B cell (primary cell): ENCODE measurements at regions of chr1 and their contacts with region 1.

Region 1: DNA sequence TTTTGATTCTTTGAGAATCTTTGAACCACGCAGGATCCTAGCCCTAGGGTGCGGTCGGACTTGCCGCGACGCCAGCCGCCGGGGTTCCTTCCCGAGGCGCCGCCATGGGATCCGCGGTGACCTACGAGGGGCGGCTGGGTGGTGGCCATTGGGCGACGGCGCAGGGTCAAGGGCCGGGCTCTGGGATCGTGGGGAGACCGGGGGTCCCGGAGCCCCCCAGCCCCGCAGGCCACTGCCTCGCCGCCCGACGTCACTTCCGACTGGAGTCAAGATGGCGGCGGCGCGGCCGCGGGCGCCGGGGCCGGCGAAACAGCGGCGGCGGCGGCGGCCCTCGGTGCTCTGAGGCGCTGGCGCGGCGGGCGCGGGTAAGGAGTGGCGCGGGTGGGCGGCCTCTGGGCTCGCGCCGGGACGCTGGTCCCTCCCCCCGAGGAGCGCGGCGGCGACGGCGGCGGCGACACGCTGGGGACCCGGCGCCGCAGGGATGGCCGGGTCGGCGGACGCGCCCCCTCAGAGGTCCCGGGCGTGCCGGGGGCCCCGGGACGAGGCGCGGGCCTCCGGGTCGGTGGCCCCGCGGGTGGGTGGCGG is at the start of gene PRDM2:
- DNase-seq: peak; percentile 90
- ATAC-seq: peak; percentile 50
- H3K4me3 ChIP-seq: peak within 1 kb of the TSS; percentile 81 to 91 (median 84)
- H3K4me3 Mint-ChIP-seq: peak within 1 kb of the TSS; percentile 96
- H3K27ac ChIP-seq: peak within 1 kb of the TSS; percentile 95 to 98
- H3K27ac Mint-ChIP-seq: peak within 1 kb of the TSS; percentile 99
- H3K4me1 ChIP-seq: peaks cover 44 to 51% of the 10 kb centered on the region in 2 donors
- H3K4me1 Mint-ChIP-seq: peaks cover 52% of the 10 kb centered on the region
- H3K27me3 ChIP-seq: no peaks in the 10 kb centered on the region
- H3K27me3 Mint-ChIP-seq: no peaks in the 10 kb centered on the region
- CTCF ChIP-seq: no peak
- total RNA-seq, gene PRDM2: 432 and 447 TPM in 2 replicates

Region 2: DNA sequence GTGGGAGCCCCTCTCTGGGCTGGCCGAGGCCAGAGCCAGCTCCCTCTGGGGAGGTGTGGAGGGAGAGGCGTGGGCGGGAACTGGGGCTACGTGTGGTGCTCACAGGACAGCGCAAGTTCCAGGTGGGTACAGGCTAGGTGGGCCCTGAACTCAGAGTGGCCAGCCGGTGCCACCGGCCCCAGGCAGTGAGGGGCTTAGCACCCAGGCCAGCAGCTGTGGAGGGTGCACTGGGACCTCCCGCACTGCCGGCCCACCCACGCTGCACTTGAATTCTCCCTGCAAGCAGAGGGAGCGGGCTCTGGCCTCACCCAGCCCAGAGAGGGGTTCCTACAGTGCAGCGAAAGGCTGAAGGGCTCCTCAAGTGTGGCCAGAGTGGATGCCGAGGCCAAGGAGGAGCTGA is 269.5 kb before region 1 on chr1:
- CTCF ChIA-PET with region 1: no interaction called
- POLR2A ChIA-PET with region 1: no interaction called
- intact Hi-C with region 1: no loop called
- DNase-seq: no peak
- ATAC-seq: no peak
- H3K4me3 ChIP-seq: no peak overlapping the region
- H3K4me3 Mint-ChIP-seq: no peak overlapping the region
- H3K27ac ChIP-seq: no peak overlapping the region
- H3K27ac Mint-ChIP-seq: no peak overlapping the region
- H3K4me1 ChIP-seq: no peaks in the 10 kb centered on the region
- H3K4me1 Mint-ChIP-seq: no peaks in the 10 kb centered on the region
- H3K27me3 ChIP-seq: no peaks in the 10 kb centered on the region
- H3K27me3 Mint-ChIP-seq: peaks cover 4% of the 10 kb centered on the region
- CTCF ChIP-seq: no peak

Region 3: DNA sequence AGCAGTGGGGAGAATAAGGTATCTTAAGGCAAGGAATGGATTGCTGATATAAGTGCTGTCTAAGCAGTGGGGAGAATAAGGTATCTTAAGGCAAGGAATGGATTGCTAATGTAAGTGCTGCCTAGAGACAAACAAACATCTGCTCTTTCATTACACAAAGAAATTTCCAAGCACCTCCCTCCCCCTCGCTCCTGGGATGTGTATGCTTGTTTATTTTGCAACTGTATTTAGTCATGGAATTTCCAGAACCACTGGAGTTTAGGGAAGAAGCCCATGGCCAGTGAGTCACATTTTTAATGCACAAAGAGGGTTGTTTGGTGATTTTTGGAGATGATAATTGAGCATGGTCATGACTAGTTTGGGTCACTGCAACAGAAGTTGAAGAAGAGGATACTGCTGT is 94.9 kb before region 1 on chr1:
- CTCF ChIA-PET with region 1: no interaction called
- POLR2A ChIA-PET with region 1: no interaction called
- intact Hi-C with region 1: no loop called
- DNase-seq: no peak
- ATAC-seq: no peak
- H3K4me3 ChIP-seq: no peak overlapping the region
- H3K4me3 Mint-ChIP-seq: no peak overlapping the region
- H3K27ac ChIP-seq: no peak overlapping the region
- H3K27ac Mint-ChIP-seq: no peak overlapping the region
- H3K4me1 ChIP-seq: no peaks in the 10 kb centered on the region
- H3K4me1 Mint-ChIP-seq: no peaks in the 10 kb centered on the region
- H3K27me3 ChIP-seq: peaks cover 0 to 3% (median 0%) of the 10 kb centered on the region in 4 experiments
- H3K27me3 Mint-ChIP-seq: peaks cover 17% of the 10 kb centered on the region
- CTCF ChIP-seq: no peak

Region 4: GRCh38 chr1:13662493-13662892 is 37.5 kb before region 1 on chr1:
- CTCF ChIA-PET with region 1: interaction called, 41 read pairs
- POLR2A ChIA-PET with region 1: interaction called, 6 read pairs
- intact Hi-C with region 1: loop called (anchors 1 kb)
- DNase-seq: no peak
- ATAC-seq: no peak
- H3K4me3 ChIP-seq: no peak overlapping the region
- H3K4me3 Mint-ChIP-seq: no peak overlapping the region
- H3K27ac ChIP-seq: no peak overlapping the region
- H3K27ac Mint-ChIP-seq: no peak overlapping the region
- H3K4me1 ChIP-seq: peaks cover 22 to 23% of the 10 kb centered on the region in 2 donors
- H3K4me1 Mint-ChIP-seq: peaks cover 31% of the 10 kb centered on the region
- H3K27me3 ChIP-seq: no peaks in the 10 kb centered on the region
- H3K27me3 Mint-ChIP-seq: peaks cover 3% of the 10 kb centered on the region
- CTCF ChIP-seq: no peak

Region 5: DNA sequence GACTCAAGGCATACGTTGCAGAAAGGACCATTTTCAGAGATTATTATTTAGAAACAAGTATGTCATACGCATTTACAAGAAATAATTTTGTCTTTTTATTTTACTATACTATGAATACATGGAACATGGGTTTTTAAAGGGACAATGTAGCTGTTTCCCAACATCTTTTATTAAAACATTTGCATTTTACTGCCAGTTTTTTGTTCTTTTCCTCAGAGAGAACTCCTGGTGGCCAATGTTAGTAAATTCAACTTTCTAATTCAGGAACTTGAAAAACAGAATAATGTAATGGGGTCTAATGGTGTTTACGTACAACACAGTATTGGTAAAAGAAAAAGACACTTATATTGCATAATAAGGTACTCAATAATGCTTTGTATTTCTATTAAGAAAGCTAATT is 14.8 kb after region 1 on chr1:
- CTCF ChIA-PET with region 1: interaction called, 19 read pairs
- POLR2A ChIA-PET with region 1: interaction called, 22 read pairs
- intact Hi-C with region 1: loop called (anchors 1 kb)
- DNase-seq: no peak
- ATAC-seq: no peak
- H3K4me3 ChIP-seq: no peak overlapping the region
- H3K4me3 Mint-ChIP-seq: peak overlapping the region; percentile 13
- H3K27ac ChIP-seq: peak overlapping the region in 1 of 2 donors; percentile 86
- H3K27ac Mint-ChIP-seq: peak overlapping the region; percentile 27
- H3K4me1 ChIP-seq: peaks cover 36 to 38% of the 10 kb centered on the region in 2 donors
- H3K4me1 Mint-ChIP-seq: peaks cover 67% of the 10 kb centered on the region
- H3K27me3 ChIP-seq: no peaks in the 10 kb centered on the region
- H3K27me3 Mint-ChIP-seq: no peaks in the 10 kb centered on the region
- CTCF ChIP-seq: peak; percentile 65

Region 6: DNA sequence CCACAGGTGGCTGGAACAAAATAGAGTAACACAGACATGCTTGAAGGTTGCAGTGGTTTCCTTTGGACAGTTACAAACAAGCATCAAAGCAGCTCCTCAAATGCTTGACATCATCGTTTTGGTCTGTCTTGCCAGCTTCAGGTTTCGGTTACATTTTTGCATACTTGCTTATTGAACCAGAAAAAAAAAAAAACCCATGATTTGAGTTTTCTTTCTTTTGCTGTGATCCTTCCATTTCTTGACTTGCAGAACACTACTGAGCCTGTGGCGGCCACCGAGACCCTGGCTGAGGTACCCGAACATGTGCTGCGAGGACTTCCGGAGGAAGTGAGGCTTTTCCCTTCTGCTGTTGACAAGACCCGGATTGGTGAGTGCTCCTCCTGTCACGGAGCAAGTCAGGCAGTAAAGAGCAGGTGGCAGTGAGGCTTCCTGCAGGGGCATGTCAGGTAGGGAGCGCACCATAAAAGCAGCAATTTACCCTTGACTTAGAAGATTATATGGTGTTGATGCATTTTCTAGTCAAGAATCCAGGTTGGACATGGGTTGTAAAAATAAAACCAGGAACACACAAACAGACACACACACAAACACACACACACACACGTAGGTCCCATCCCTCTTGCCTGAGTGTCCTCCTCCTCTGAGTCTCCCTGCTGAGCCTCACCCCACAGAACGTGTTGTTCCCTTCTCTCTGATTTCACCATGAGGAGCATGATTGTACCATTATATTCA is 30.9 kb after region 1 on chr1:
- CTCF ChIA-PET with region 1: interaction called, 339 read pairs
- POLR2A ChIA-PET with region 1: interaction called, 84 read pairs
- intact Hi-C with region 1: loop called (anchors 1 kb)
- DNase-seq: peak; percentile 97
- ATAC-seq: peak; percentile 88
- H3K4me3 ChIP-seq: peak overlapping the region; percentile 12 to 51 (median 34)
- H3K4me3 Mint-ChIP-seq: peak overlapping the region; percentile 81
- H3K27ac ChIP-seq: peak overlapping the region; percentile 98 to 99
- H3K27ac Mint-ChIP-seq: peak overlapping the region; percentile 93
- H3K4me1 ChIP-seq: peaks cover 84 to 95% of the 10 kb centered on the region in 2 donors
- H3K4me1 Mint-ChIP-seq: peaks cover 96% of the 10 kb centered on the region
- H3K27me3 ChIP-seq: no peaks in the 10 kb centered on the region
- H3K27me3 Mint-ChIP-seq: no peaks in the 10 kb centered on the region
- CTCF ChIP-seq: peak; percentile 31